ENCODE measurements at regions of chr7 and their contacts with region 1.

Region 1: DNA sequence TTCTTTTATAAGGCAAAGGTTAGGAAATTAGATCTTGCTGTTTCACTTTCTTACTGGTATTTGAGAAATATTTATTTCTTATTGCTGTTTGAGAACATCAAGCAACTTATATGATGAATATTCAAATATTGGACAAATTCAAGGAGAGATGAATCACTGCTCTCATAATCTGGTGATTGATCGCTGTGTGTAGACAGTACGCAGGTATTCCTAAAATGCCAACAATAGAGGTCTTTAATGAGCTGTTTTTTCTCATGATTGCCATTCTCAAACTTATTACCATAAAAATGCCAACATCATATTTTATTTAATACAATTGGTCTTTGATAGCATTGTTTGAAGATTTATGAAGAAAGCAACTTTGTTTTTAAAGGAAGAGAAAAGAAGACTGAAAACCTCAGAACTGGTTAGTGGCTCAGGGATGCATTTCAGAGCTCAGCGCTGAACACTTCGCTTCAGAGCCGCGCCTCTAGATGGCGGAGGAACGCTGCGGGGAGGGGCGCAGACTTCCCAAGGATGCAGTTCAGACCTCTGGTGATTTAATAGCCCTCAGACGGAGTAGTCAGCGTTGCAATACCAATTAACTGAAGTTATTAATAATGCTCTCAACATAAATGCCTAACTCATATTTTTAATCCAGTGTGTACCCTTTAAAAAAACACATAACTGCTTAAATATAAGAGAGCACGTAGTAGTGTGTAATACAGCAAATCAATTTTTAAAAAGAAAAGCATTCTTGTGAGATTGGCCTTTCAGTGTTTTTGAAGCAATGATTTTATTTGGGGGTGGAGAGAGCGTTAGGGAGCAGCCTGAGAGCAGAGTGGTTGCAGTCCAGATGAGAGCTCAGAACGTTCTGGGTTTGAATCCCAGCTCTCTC is 38.5 kb upstream of the STEAP4 start:
- DNase-seq: peak; percentile 25
- H3K4me3 ChIP-seq: no peak overlapping the region
- H3K27ac ChIP-seq: no peak overlapping the region
- H3K4me1 ChIP-seq: no peaks in the 10 kb centered on the region
- H3K27me3 ChIP-seq: peaks cover 0 to 5% of the 10 kb centered on the region in 2 experiments
- CTCF ChIP-seq: peak; percentile 35 to 69
- POLR2A ChIP-seq: no peak

Region 2: GRCh38 chr7:88219781-88220747 is 125.1 kb before region 1 on chr7 and contains the start of gene SRI:
- CTCF ChIA-PET with region 1: no interaction called
- POLR2A ChIA-PET with region 1: no interaction called
- dilution Hi-C with region 1: no loop called
- intact Hi-C with region 1: no loop called
- DNase-seq: peak; percentile 88
- H3K4me3 ChIP-seq: peak within 1 kb of the TSS; percentile 81 to 94 (median 93)
- H3K27ac ChIP-seq: peak within 1 kb of the TSS; percentile 94
- H3K4me1 ChIP-seq: peaks cover 13% of the 10 kb centered on the region
- H3K27me3 ChIP-seq: no peaks in the 10 kb centered on the region
- CTCF ChIP-seq: peak; percentile 57 to 62
- POLR2A ChIP-seq: peak; percentile 82
- total RNA-seq, gene SRI: 191 and 204 TPM in 2 replicates

Region 3: DNA sequence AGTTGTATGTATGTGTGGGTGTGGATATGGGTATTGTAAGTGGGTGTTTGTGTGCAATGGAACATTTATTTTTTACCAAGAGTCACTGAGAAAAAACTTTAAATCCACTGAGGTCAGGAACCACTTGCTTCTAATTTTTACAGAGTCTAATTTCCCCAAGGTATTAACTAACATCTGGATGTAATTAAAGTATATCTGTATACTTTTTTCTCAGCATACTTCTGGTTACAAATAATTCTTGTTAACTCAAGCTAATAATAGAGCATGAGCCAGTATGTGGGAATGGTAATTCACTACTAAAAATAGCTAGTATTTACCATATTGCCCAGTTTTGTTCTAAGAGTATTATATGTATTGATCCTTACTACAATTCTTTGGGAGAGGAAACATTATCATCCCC is 13.9 kb before region 1 on chr7:
- CTCF ChIA-PET with region 1: interaction called, 11 read pairs
- POLR2A ChIA-PET with region 1: no interaction called
- dilution Hi-C with region 1: no loop called
- intact Hi-C with region 1: no loop called
- DNase-seq: no peak
- H3K4me3 ChIP-seq: no peak overlapping the region
- H3K27ac ChIP-seq: no peak overlapping the region
- H3K4me1 ChIP-seq: no peaks in the 10 kb centered on the region
- H3K27me3 ChIP-seq: no peaks in the 10 kb centered on the region
- CTCF ChIP-seq: no peak
- POLR2A ChIP-seq: no peak

Region 4: GRCh38 chr7:88357781-88358525 is 12.8 kb after region 1 on chr7:
- CTCF ChIA-PET with region 1: interaction called, 12 read pairs
- POLR2A ChIA-PET with region 1: no interaction called
- dilution Hi-C with region 1: no loop called
- intact Hi-C with region 1: no loop called
- DNase-seq: no peak
- H3K4me3 ChIP-seq: no peak overlapping the region
- H3K27ac ChIP-seq: no peak overlapping the region
- H3K4me1 ChIP-seq: no peaks in the 10 kb centered on the region
- H3K27me3 ChIP-seq: peaks cover 2 to 5% of the 10 kb centered on the region in 2 experiments
- CTCF ChIP-seq: peak in 1 of 2 donors; percentile 26
- POLR2A ChIP-seq: no peak

Region 5: DNA sequence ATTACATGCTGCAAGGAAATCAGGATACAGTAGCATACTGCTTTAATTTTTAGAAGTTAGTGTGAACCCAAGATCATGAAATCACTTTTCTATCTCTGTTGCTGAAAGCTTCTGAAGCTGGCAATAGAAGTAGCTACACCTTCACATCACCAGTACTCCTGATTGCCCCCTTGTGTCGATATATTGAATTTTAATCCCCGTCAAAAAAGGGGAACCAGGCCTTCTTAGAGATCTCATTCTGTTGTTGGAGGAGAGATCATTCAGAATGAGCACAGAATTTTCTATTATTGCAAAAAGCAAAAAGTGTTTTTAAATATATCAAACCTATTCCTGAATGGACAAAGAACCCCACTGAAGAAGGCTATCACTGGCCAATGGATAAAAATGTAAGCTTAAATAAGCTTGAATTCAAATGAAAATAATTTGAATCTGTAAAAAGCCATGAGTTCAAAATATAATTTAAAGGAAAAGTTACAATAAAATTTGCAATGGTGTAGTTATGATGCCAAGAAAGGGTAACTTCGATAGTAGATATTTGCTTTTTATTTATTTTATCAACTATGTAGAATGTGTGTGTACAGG is 490.0 kb after region 1 on chr7:
- CTCF ChIA-PET with region 1: interaction called, 56 read pairs
- POLR2A ChIA-PET with region 1: no interaction called
- dilution Hi-C with region 1: no loop called
- intact Hi-C with region 1: no loop called
- DNase-seq: peak; percentile 58
- H3K4me3 ChIP-seq: no peak overlapping the region
- H3K27ac ChIP-seq: no peak overlapping the region
- H3K4me1 ChIP-seq: no peaks in the 10 kb centered on the region
- H3K27me3 ChIP-seq: no peaks in the 10 kb centered on the region
- CTCF ChIP-seq: peak; percentile 23 to 40
- POLR2A ChIP-seq: no peak

Measured in endothelial cell of umbilical vein (primary cell).